B cell (primary cell): ENCODE measurements at regions of chr11 and their contacts with region 1.

Region 1: DNA sequence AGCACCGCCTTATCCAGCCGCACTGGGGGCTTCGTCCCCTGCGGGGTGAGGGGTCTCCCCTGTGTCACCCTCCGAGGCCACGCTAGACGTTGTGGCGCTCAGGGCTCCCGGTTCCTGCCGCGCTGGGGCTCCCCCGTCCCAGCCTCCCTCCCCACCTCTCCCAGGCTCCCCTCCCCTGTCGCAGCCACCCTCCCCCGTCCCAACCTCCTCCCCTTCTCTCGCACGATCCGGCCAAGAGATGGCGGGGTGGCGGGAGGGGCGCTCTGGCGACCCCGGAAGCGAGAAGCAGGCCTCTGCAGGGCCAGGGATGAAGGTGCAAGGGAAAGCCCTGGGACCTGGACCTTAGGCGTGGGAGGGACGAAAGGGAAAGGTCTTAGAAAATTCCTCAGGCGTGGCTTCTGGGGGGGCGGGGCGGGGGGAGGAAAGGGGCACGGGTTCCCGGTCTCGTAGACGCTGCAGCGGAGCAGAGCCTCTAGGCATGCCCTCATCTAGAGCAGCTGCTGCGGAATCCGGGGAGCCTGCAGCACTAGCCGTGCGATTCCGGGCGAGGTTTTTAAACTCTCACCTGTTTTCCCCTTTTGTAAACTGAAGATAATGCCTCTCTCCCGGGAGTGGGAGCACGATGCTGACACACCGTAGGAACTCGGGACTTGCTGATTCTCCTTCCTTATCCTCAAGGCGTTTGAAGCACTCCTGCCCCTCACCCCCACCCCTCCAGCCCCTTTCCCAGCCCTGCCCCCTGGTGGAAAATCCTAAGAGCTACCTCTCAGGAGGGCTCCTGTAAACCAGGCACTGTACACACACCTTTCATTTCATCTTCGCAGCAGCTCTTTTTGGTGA is 14.4 kb downstream of the KCNJ5 start:
- DNase-seq: peak; percentile 60
- ATAC-seq: peak; percentile 57
- H3K4me3 ChIP-seq: peak overlapping the region; percentile 8 to 81 (median 59)
- H3K4me3 Mint-ChIP-seq: peak overlapping the region; percentile 81
- H3K27ac ChIP-seq: no peak overlapping the region
- H3K27ac Mint-ChIP-seq: peak overlapping the region; percentile 50
- H3K4me1 ChIP-seq: peaks cover 21 to 28% of the 10 kb centered on the region in 2 donors
- H3K4me1 Mint-ChIP-seq: peaks cover 26% of the 10 kb centered on the region
- H3K27me3 ChIP-seq: peaks cover 0 to 92% (median 57%) of the 10 kb centered on the region in 4 experiments
- H3K27me3 Mint-ChIP-seq: peaks cover 69% of the 10 kb centered on the region
- CTCF ChIP-seq: peak; percentile 60

Region 2: GRCh38 chr11:128814856-128815705 is 90.5 kb before region 1 on chr11:
- CTCF ChIA-PET with region 1: no interaction called
- POLR2A ChIA-PET with region 1: no interaction called
- intact Hi-C with region 1: no loop called
- DNase-seq: no peak
- ATAC-seq: no peak
- H3K4me3 ChIP-seq: no peak overlapping the region
- H3K4me3 Mint-ChIP-seq: no peak overlapping the region
- H3K27ac ChIP-seq: peak overlapping the region in 1 of 2 donors; percentile 9
- H3K27ac Mint-ChIP-seq: peak overlapping the region; percentile 37
- H3K4me1 ChIP-seq: no peaks in the 10 kb centered on the region
- H3K4me1 Mint-ChIP-seq: peaks cover 4% of the 10 kb centered on the region
- H3K27me3 ChIP-seq: no peaks in the 10 kb centered on the region
- H3K27me3 Mint-ChIP-seq: no peaks in the 10 kb centered on the region
- CTCF ChIP-seq: no peak

Region 3: GRCh38 chr11:128917144-128917724 is 11.7 kb after region 1 on chr11:
- CTCF ChIA-PET with region 1: interaction called, 13 read pairs
- POLR2A ChIA-PET with region 1: no interaction called
- intact Hi-C with region 1: no loop called
- DNase-seq: no peak
- ATAC-seq: no peak
- H3K4me3 ChIP-seq: no peak overlapping the region
- H3K4me3 Mint-ChIP-seq: no peak overlapping the region
- H3K27ac ChIP-seq: no peak overlapping the region
- H3K27ac Mint-ChIP-seq: no peak overlapping the region
- H3K4me1 ChIP-seq: peaks cover 0 to 4% of the 10 kb centered on the region in 2 donors
- H3K4me1 Mint-ChIP-seq: peaks cover 5% of the 10 kb centered on the region
- H3K27me3 ChIP-seq: peaks cover 0 to 21% (median 0%) of the 10 kb centered on the region in 4 experiments
- H3K27me3 Mint-ChIP-seq: peaks cover 41% of the 10 kb centered on the region
- CTCF ChIP-seq: no peak